GM10248 (cell line): ENCODE measurements at regions of chr13 and their contacts with region 1.

Region 1: DNA sequence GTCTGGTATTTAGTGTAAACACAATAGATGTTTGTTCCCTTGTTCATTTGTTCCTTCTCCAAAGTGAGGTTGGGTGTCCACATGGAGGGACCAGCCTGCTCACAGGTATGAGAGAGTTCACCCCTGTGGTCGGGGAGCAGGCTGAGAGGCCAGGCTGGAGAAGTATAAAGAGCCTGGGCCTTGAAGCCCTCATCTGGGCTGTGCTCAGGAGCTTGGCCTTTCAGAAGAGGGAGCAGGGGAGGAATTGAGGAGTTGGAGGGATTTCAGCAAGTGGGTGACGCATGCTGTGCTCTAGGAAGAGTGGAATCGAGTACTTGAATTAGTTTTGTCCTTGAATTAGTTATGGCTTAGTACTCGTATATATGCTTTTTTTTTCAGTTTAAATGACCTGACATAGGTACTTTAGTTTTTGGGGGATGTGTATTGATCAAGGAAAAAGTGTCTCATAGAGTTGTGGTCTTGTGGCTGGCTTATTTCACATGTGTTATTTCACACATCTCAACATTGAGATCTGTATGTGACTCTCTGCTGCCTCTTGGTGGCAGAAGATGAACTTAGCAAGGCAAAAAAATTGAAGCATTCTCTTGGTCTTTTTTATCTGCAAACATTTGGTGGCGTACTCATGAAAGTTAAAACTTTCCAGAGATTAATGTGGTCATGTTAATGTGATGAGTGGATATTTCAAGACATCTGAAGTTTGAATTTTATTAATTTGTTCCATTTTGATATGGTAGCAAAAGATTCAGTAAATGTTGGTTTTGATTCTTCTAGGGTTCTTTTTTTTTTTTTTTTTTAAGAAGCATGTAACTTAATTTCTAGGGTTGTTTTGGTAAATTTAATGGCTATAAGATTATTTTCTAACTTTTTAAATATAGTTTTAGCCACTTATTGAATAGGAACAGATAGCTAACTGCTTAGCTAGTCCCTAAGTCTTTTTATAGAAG is 54.3 kb downstream of the SLAIN1 start:
- DNase-seq: peak; percentile 46
- CTCF ChIP-seq: peak; percentile 81

Region 2: DNA sequence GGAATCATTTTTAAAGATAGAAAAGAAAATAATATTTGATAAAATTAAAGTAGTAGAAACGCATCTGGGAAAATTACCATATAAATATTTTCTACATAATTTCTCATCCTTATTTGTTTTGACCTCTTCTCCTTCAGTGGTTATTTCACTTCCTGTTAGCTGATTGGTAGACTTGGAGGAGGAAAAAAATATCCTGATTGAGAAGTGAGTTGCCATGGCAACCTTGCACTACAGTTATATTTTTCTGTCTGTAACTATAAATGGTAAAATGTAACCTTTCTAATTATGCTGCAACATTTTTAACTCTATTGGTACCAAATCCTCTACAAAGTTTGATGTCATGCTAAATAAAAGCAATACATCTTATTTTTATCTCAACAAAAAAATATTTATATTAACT is 171.0 kb before region 1 on chr13:
- CTCF ChIA-PET with region 1: no interaction called
- POLR2A ChIA-PET with region 1: no interaction called
- DNase-seq: no peak
- CTCF ChIP-seq: no peak

Region 3: DNA sequence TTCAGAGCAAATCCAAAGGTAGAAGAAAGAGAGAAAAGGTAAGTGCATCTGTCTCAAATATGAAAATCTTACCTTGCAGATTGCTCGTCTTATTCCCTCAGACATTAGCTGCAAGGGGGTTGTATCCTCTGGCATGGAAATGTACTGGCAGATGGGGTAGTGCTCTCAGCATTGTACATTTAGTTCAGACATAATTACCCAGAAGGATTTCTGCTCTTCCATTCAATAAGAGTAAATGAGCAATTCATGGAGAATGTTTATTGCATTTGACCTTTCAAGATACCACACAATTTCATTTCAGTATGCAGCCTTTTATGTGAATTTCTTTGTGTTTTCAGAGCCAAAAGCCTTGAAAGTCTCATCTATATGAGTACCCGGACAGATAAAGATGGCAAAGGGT is 152.4 kb before region 1 on chr13:
- CTCF ChIA-PET with region 1: interaction called, 104 read pairs
- POLR2A ChIA-PET with region 1: no interaction called
- DNase-seq: no peak
- CTCF ChIP-seq: no peak

Region 4: GRCh38 chr13:77697217-77698103 is 54.3 kb before region 1 on chr13 and contains the start of gene SLAIN1:
- CTCF ChIA-PET with region 1: interaction called, 12 read pairs
- POLR2A ChIA-PET with region 1: no interaction called
- DNase-seq: peak; percentile 95
- CTCF ChIP-seq: no peak

Region 5: DNA sequence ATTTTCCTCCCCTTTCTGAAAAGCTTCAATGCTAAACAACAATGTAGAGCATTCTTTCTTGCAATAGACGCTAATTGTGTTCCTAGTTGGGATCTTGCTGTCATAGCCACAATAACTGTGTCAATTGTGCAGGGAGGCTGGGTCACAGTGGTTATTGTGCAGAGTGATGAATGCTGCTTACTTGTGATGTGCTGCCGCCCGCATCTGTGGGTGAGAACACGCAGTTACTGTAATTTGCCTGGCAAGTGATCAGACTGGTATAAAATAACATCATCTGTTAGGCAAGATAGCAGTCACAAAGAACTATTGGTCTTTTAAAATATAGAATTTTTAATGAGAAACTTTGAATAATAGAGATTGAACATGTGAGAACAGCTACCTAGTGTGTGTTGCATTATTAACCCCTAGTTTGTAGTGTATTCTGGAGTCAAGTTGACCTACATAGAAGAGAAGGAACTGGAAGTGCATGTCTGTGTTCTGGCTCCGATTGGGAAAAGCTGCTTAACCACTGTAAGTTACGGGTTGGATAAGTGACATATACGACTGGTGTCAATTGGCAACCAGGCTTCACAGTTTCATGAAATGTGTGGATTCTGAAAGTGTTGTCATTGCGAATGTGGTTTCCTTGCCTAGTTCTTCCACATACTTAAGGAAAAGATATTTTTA is 10.7 kb before region 1 on chr13:
- CTCF ChIA-PET with region 1: interaction called, 11 read pairs
- POLR2A ChIA-PET with region 1: no interaction called
- DNase-seq: no peak
- CTCF ChIP-seq: no peak